Caco-2 (cell line): ENCODE measurements at regions of chr5 and their contacts with region 1.

Region 1: DNA sequence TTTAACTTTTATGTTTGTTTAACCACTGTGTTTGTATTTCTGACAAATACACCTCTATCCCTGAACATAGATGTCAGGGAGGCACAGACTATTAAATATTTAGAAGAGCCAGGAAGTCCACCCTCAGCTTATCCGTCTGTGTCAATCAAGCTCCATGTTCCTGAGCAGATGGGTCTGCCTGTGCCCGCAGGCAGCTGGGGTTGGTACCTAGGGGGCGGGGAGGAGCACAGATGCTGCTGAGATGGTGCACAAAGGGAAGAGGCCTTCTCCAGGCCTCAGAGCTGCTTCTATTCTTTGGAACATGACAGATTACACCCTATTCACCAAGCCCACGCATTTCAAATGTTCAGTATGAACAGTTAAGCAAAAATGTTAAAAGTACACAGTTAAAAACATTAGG is 142.1 kb downstream of the EPB41L4A start:
- DNase-seq: no peak
- H3K4me3 ChIP-seq: no peak overlapping the region
- H3K4me3 Mint-ChIP-seq: no peak overlapping the region
- H3K27ac Mint-ChIP-seq: no peak overlapping the region
- H3K4me1 ChIP-seq: no peaks in the 10 kb centered on the region
- H3K4me1 Mint-ChIP-seq: no peaks in the 10 kb centered on the region
- H3K27me3 ChIP-seq: peaks cover 2% of the 10 kb centered on the region; the same call in 1 of the 2 replicates
- H3K27me3 Mint-ChIP-seq: peaks cover 3% of the 10 kb centered on the region
- CTCF ChIP-seq: no peak

Region 2: DNA sequence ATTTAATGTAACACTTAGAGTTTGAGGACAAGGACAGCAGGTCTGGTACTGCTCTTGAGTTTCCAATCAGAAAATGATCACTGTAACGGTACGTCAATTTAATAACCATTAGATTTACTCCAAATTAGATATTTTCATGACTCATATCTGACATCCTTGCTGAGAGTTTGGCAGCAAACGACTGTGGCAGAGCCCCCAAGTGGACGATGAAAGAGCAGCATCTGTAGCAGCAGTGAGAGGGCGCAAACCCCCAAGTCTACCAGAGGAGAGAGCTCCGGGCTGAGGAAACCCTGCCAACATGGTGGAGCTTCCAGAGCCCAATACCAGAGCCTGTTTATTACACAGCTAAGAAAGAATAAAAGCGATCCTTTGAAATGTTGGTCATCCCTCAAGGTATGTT is 215.3 kb after region 1 on chr5:
- CTCF ChIA-PET with region 1: no interaction called
- POLR2A ChIA-PET with region 1: no interaction called
- intact Hi-C with region 1: loop called (anchors 1 kb)
- DNase-seq: peak; percentile 48 to 52
- H3K4me3 ChIP-seq: no peak overlapping the region
- H3K4me3 Mint-ChIP-seq: no peak overlapping the region
- H3K27ac Mint-ChIP-seq: no peak overlapping the region
- H3K4me1 ChIP-seq: no peaks in the 10 kb centered on the region
- H3K4me1 Mint-ChIP-seq: no peaks in the 10 kb centered on the region
- H3K27me3 ChIP-seq: no peaks in the 10 kb centered on the region
- H3K27me3 Mint-ChIP-seq: peaks cover 9% of the 10 kb centered on the region
- CTCF ChIP-seq: peak; percentile 39 to 70